ENCODE measurements at regions of chr19 and their contacts with region 1.

Region 1: DNA sequence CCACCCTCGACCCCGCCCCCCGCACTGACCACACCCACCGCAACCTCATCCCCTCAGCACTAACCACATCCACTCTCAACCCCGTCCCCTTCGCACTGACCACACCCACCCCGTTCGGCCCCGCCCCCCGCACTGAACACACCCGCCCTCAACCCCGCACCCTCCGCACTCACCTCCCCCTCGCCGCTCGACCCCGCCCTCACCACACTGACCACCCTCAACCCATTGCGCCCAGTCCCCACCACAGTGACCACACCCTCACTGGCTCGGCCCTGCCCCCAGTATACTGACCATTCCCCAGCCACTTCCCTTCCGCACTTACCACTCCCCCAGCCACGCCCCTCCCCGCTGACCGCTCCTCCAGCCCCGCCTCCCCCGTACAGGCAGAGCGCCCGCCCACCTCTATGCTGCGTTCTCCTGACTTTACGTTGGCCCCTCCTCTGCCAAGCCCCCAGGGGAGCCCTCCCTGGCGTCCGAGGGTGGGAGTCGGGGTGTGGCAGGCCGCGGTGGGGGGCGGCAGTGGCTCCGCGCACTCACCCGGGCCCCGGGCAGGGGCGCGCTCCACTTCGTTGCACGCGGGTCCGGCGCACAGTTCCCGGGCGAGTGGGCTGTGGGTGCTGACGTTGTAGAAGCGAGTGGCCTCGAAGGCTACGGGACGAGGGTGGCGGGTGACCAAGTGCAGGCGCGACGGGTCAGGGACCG is 8.5 kb downstream of the F2RL3 start:
- DNase-seq: peak; percentile 66
- ATAC-seq: peak; percentile 57
- H3K4me3 Mint-ChIP-seq: peak overlapping the region; percentile 31
- H3K27ac Mint-ChIP-seq: no peak overlapping the region
- H3K4me1 Mint-ChIP-seq: peaks cover 11% of the 10 kb centered on the region
- H3K27me3 Mint-ChIP-seq: peaks cover 45% of the 10 kb centered on the region
- CTCF ChIP-seq: no peak

Region 2: GRCh38 chr19:16771618-16772017 is 125.7 kb before region 1 on chr19:
- CTCF ChIA-PET with region 1: no interaction called
- POLR2A ChIA-PET with region 1: no interaction called
- intact Hi-C with region 1: loop called (anchors 10 kb)
- DNase-seq: peak; percentile 88
- ATAC-seq: peak; percentile 83
- H3K4me3 Mint-ChIP-seq: no peak overlapping the region
- H3K27ac Mint-ChIP-seq: no peak overlapping the region
- H3K4me1 Mint-ChIP-seq: no peaks in the 10 kb centered on the region
- H3K27me3 Mint-ChIP-seq: peaks cover 25% of the 10 kb centered on the region
- CTCF ChIP-seq: peak; percentile 84

Measured in activated CD8-positive, alpha-beta T cell treated with anti-CD3 and anti-CD28 coated beads for 36 hours (primary cell).